Activated naive CD4-positive, alpha-beta T cell treated with anti-CD3 and anti-CD28 coated beads, Interleukin-2, amount 10 ng/mL, durations not matched to agents 7 days and 5 days (primary cell): ENCODE measurements at regions of chr2 and their contacts with region 1.

Region 1: DNA sequence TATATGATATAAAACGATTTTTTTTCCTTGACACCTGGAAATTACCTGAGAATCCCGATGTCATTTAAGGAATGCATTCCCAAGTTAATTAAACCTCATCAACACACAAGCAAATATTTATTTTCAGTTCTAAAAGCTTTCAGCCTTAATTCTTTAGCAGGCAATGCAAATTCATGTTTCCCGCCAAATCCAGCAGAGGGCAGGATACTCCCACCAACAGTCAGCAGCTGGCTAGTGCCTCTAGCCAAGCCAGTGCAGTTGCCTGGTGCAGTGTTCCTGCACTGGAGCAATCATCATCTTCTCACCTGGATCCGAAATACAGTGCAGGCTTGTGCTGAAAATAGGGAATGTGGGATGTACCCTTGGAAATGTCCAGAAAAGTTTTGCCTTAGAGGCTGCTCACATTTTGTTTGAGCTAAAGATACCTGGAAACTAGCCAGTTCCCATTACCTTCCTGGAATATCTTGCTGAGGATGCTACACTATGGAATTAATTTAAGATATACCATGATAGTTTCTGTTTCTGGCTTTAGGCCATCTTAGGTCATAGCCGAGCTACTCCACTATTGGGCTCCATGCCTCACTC is 48.4 kb upstream of the CYTIP start:
- DNase-seq: peak; percentile 83
- H3K4me3 Mint-ChIP-seq: no peak overlapping the region
- H3K27ac Mint-ChIP-seq: no peak overlapping the region
- H3K4me1 Mint-ChIP-seq: peaks cover 62% of the 10 kb centered on the region
- H3K27me3 Mint-ChIP-seq: no peaks in the 10 kb centered on the region

Region 2: GRCh38 chr2:157318884-157319283 is 173.4 kb before region 1 on chr2:
- CTCF ChIA-PET with region 1: no interaction called
- DNase-seq: no peak
- H3K4me3 Mint-ChIP-seq: no peak overlapping the region
- H3K27ac Mint-ChIP-seq: no peak overlapping the region
- H3K4me1 Mint-ChIP-seq: peaks cover 7% of the 10 kb centered on the region
- H3K27me3 Mint-ChIP-seq: no peaks in the 10 kb centered on the region

Region 3: DNA sequence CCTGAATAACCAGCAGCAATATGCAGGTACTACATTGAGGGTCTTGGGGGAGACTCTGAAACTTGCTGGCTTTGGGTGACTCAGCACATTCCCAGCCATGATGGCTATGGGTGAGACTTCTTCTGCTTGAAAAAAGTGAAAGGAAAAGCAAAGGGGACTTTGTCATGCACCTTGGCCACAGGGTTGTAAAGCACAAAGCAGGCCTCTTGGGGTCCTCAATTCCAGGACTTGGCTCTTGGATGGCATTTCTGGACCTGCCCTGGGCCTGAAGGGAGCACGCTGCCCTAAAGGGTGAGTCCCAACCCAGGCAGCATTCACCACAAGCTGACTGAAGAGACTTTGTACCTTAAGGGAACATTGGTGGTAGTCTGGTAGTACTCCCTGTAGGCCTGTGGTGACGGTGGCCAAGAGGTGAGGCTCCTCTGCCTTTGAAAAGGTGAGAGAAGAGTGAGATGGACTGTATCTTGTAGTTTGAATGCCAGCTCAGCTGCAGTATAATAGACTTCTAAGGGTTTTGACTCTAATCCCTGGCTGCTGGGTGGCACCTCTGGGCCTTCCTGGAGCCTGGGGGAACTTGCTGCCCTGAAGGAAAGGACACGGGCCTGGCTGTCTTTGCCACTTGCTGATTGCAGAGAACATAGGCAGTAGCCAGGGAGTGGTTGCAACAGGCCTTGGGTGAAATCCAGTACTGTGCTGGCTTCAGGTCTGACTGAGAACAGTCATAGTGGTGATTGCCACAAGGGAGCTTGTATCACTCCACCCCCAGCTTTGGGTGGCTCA is 11.9 kb before region 1 on chr2:
- CTCF ChIA-PET with region 1: interaction called, 38 read pairs
- DNase-seq: peak; percentile 48
- H3K4me3 Mint-ChIP-seq: peak overlapping the region; percentile 69
- H3K27ac Mint-ChIP-seq: peak overlapping the region; percentile 93
- H3K4me1 Mint-ChIP-seq: peaks cover 84% of the 10 kb centered on the region
- H3K27me3 Mint-ChIP-seq: no peaks in the 10 kb centered on the region

Region 4: DNA sequence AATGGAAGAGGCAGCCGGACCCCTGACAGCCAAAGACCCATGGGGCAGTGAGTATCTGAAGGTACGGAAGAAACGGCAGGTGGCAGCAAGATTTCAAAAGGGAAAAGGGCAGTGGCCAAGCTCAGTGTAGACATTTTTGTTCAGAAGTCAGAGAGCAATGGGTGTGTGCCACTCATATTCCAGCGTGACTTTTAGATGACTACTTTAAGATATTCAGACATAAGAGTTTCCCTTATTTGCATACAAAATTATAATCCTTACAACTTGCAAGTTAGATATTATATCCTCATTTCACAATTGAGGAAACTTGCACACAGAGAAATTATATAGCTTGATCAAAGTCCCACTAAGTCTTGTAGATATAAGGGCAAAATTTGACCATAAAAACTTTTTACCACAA is 12.3 kb after region 1 on chr2:
- CTCF ChIA-PET with region 1: interaction called, 11 read pairs
- DNase-seq: no peak
- H3K4me3 Mint-ChIP-seq: no peak overlapping the region
- H3K27ac Mint-ChIP-seq: no peak overlapping the region
- H3K4me1 Mint-ChIP-seq: peaks cover 10% of the 10 kb centered on the region
- H3K27me3 Mint-ChIP-seq: peaks cover 4% of the 10 kb centered on the region

Region 5: DNA sequence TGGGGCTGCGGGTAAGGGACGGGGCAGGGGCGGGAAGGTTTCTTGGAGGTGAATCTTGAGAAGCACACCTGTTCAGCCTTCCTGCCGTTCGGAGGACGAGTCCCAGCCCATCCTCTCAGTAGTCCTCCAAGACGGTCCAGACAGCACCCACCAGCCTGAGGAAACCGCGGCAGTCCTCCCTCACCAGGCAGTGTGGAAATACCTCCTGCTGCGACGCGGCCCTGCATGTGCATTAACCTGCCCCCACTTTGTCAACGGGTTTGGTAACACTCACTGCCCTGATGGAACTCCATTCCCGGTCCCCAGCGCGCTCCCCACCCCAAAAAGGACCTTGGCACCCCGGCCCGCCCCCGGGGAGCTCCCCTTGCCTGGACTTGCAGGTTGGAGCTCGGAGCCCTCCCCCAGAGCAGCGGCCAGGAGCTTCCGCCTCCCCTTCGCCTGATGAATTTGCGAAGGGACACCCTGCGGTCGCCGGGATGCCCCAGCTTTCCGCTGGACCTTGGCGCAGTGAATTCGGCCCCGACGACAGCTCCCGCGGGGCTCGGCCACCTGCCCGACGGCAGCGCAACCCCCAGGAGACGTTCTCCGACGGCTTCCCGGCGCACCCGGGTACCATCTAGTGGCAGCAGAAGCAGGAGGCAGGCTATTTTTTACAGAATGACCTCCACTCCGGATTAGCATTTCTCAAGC is 104.9 kb after region 1 on chr2:
- CTCF ChIA-PET with region 1: interaction called, 24 read pairs
- DNase-seq: peak; percentile 69
- H3K4me3 Mint-ChIP-seq: peak overlapping the region; percentile 54
- H3K27ac Mint-ChIP-seq: no peak overlapping the region
- H3K4me1 Mint-ChIP-seq: peaks cover 11% of the 10 kb centered on the region
- H3K27me3 Mint-ChIP-seq: peaks cover 11% of the 10 kb centered on the region